Activated naive CD4-positive, alpha-beta T cell treated with anti-CD3 and anti-CD28 coated beads for 36 hours (primary cell): ENCODE measurements at regions of chr19 and their contacts with region 1.

Region 1: GRCh38 chr19:18542936-18543815 is at the start of gene FKBP8:
- DNase-seq: peak; percentile 97
- H3K4me3 Mint-ChIP-seq: peak within 1 kb of the TSS; percentile 88
- H3K27ac Mint-ChIP-seq: peak within 1 kb of the TSS; percentile 95
- H3K4me1 Mint-ChIP-seq: peaks cover 21% of the 10 kb centered on the region
- H3K27me3 Mint-ChIP-seq: no peaks in the 10 kb centered on the region
- total RNA-seq, gene FKBP8: 161 to 163 TPM

Region 2: GRCh38 chr19:18373892-18374629 is 169.1 kb before region 1 on chr19:
- CTCF ChIA-PET with region 1: no interaction called
- intact Hi-C with region 1: no loop called
- DNase-seq: peak; percentile 81
- H3K4me3 Mint-ChIP-seq: no peak overlapping the region
- H3K27ac Mint-ChIP-seq: peak overlapping the region; percentile 71
- H3K4me1 Mint-ChIP-seq: peaks cover 9% of the 10 kb centered on the region
- H3K27me3 Mint-ChIP-seq: no peaks in the 10 kb centered on the region

Region 3: DNA sequence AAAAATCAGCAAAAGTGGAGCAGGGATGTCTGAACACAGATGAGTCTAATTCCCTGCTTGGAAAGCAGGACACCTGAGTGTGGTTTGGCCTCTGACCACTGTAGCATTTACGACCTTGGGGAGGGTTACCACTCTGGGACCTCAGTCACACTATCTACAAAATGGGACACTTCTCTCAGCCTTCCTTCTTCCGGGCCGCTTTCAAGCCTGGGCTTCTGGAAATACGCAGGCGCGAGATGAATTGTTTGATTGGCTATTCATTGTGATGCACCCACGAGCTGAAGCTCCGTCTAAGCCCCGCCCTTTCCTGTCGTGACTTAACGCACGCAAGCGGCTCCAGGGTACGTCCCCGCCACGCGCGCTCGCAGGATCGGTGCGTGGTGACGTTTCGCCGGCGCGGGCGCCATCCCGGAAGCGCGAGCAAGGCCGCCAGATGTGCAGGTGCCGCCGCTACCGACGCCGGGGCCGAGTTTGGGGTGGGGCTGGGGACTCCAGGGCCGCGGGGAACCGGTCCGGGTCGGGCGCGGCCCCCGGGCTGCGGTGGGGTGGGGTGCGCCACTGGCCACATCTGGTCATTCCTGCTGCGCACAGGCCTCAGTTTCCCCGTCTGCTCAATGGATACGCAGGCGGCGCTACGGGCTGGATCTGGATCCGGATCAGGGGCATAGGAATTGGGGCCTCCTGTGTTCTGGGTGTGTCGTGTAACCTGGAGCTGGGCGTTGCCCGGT is 14.5 kb after region 1 on chr19 and contains the start of gene KXD1:
- CTCF ChIA-PET with region 1: interaction called, 12 read pairs
- intact Hi-C with region 1: loop called (anchors 1 kb)
- DNase-seq: peak; percentile 99
- H3K4me3 Mint-ChIP-seq: peak within 1 kb of the TSS; percentile 93
- H3K27ac Mint-ChIP-seq: peak within 1 kb of the TSS; percentile 92
- H3K4me1 Mint-ChIP-seq: peaks cover 24% of the 10 kb centered on the region
- H3K27me3 Mint-ChIP-seq: no peaks in the 10 kb centered on the region
- total RNA-seq, gene KXD1: 86.7 TPM

Region 4: GRCh38 chr19:18571564-18572300 is 28.6 kb after region 1 on chr19 and contains the start of gene UBA52:
- CTCF ChIA-PET with region 1: interaction called, 3 read pairs
- intact Hi-C with region 1: loop called (anchors 1 kb)
- DNase-seq: peak; percentile 99
- H3K4me3 Mint-ChIP-seq: peak within 1 kb of the TSS; percentile 90
- H3K27ac Mint-ChIP-seq: peak within 1 kb of the TSS; percentile 93
- H3K4me1 Mint-ChIP-seq: peaks cover 30% of the 10 kb centered on the region
- H3K27me3 Mint-ChIP-seq: no peaks in the 10 kb centered on the region
- total RNA-seq, gene UBA52: 1,997 to 2,122 TPM

Region 5: DNA sequence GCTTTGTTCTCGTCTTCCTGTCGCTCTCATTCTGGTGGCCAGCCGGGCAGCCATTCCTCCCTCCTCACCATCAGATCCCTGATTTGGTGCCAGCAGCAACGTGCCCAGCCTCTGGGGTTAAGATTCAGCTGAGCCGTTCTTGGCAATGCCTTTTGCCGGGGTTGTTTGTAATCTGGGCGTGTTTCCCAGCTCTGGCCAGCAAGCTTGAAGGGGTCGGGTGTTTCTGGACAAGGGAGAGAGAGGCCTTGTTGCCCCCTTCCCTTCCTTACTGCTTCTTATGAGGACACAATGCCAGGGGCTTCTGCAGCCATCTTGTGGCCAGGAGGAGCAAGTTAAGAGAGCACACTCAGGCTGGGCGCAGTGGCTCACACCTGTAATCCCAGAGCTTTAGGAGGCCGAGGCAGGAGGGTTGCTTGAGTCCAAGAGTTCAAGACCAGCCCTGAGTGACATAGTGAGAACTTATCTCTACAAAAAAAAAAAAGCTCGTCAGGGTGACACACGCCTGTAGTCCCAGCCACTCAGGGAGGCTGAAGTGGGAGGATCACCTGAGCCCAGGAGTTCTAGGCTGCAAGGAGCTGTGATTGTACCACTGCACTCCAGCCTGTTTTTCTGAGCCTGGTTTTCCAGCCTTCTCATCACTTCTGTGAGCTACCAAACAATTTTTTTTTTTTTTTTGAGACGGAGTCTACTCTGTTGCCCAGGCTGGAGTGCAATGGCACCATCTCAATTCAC is 129.6 kb after region 1 on chr19:
- CTCF ChIA-PET with region 1: no interaction called
- intact Hi-C with region 1: loop called (anchors 2 kb)
- DNase-seq: no peak
- H3K4me3 Mint-ChIP-seq: no peak overlapping the region
- H3K27ac Mint-ChIP-seq: no peak overlapping the region
- H3K4me1 Mint-ChIP-seq: no peaks in the 10 kb centered on the region
- H3K27me3 Mint-ChIP-seq: no peaks in the 10 kb centered on the region

Region 6: GRCh38 chr19:18846862-18847548 is 303.8 kb after region 1 on chr19:
- CTCF ChIA-PET with region 1: interaction called, 3 read pairs
- intact Hi-C with region 1: loop called (anchors 2 kb)
- DNase-seq: peak; percentile 79
- H3K4me3 Mint-ChIP-seq: no peak overlapping the region
- H3K27ac Mint-ChIP-seq: no peak overlapping the region
- H3K4me1 Mint-ChIP-seq: peaks cover 46% of the 10 kb centered on the region
- H3K27me3 Mint-ChIP-seq: no peaks in the 10 kb centered on the region

Region 7: GRCh38 chr19:19033426-19034203 is 490.4 kb after region 1 on chr19 and contains the starts of genes ARMC6 and SUGP2:
- CTCF ChIA-PET with region 1: no interaction called
- intact Hi-C with region 1: loop called (anchors 2 kb)
- DNase-seq: peak; percentile 85
- H3K4me3 Mint-ChIP-seq: peak within 1 kb of the TSS; percentile 95
- H3K27ac Mint-ChIP-seq: peak within 1 kb of the TSS; percentile 86
- H3K4me1 Mint-ChIP-seq: peaks cover 37% of the 10 kb centered on the region
- H3K27me3 Mint-ChIP-seq: no peaks in the 10 kb centered on the region
- total RNA-seq, gene ARMC6: 24.2 to 24.6 TPM
- total RNA-seq, gene SUGP2: 149 to 154 TPM